Activated naive CD4-positive, alpha-beta T cell treated with anti-CD3 and anti-CD28 coated beads for 36 hours (primary cell): ENCODE measurements at regions of chr7 and their contacts with region 1.

Region 1: GRCh38 chr7:8418629-8419245 is 14.7 kb upstream of the NXPH1 start:
- DNase-seq: peak; percentile 63
- H3K4me3 Mint-ChIP-seq: no peak overlapping the region
- H3K27ac Mint-ChIP-seq: no peak overlapping the region
- H3K4me1 Mint-ChIP-seq: no peaks in the 10 kb centered on the region
- H3K27me3 Mint-ChIP-seq: no peaks in the 10 kb centered on the region

Region 2: DNA sequence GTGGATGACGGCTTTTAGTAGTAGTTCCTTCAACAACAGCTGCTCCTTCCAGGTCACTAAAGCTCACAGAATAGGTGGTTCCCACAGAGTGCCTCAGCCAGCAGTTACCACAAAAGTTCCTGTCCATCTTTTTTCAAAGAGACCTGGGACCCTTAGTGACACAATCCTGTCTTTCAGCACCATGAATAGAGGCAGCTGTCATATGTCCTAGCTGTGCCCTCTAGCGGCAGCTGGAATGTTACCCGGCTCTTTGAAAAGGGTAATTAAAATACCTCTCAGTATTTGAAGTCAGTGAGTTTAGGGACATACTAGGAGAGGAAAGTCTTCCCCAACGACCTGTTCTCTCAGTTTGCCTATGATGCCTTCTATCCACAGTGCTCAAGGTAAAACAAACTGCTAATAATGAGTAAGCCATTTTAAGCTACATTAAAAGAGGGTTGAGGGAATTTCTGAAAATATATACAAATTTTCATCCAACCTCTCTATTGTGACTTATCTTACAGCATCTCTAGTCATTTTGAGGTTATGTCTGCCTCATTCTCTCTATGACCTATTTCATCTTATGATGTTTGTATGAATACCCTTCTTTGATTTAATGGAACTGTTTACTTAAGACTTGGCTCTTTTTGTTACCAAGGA is 305.5 kb after region 1 on chr7:
- CTCF ChIA-PET with region 1: interaction called, 5 read pairs
- intact Hi-C with region 1: loop called (anchors 1 kb)
- DNase-seq: peak; percentile 47
- H3K4me3 Mint-ChIP-seq: no peak overlapping the region
- H3K27ac Mint-ChIP-seq: no peak overlapping the region
- H3K4me1 Mint-ChIP-seq: no peaks in the 10 kb centered on the region
- H3K27me3 Mint-ChIP-seq: no peaks in the 10 kb centered on the region